Left colon (tissue), 2 donors: ENCODE measurements at regions of chr18 and their contacts with region 1.

Region 1: GRCh38 chr18:13019301-13019700 is 28.1 kb downstream of the CEP192 start:
- DNase-seq: no peak
- ATAC-seq: no peak

Region 2: GRCh38 chr18:12921178-12921577 is 98.1 kb before region 1 on chr18:
- intact Hi-C with region 1: no loop called
- DNase-seq: no peak
- ATAC-seq: no peak

Region 3: DNA sequence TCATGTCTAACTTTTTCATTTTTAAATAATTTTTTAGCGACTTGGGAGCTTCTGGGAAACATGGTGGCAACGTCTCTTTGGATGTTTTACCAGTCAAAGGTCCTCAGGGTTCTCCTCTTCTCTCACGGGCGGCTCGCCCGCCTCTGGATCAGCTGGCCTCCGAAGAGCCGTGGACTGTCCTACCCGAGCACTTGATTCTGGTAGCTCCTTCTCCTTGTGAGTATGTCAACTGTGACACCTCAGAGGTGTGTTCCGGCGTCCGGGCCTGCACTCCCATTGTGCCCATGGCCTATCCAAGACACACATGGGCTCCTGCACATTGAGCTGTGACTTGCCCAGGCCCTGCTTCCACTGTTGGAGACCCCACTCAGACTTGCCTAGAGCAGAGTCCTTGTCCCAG is 76.2 kb after region 1 on chr18:
- intact Hi-C with region 1: loop called in 1 of 2 experiments (anchors 10 kb)
- DNase-seq: no peak
- ATAC-seq: no peak